CD4-positive, alpha-beta T cell (primary cell): ENCODE measurements at regions of chr6 and their contacts with region 1.

Region 1: GRCh38 chr6:145963216-145964068 is 716 bp downstream of the SHPRH start:
- DNase-seq: peak; percentile 5 to 64 (median 26)
- ATAC-seq: peak; percentile 15
- H3K4me3 ChIP-seq: peak overlapping the region; percentile 76
- H3K4me3 Mint-ChIP-seq: peak overlapping the region; percentile 96
- H3K27ac ChIP-seq: no peak overlapping the region
- H3K27ac Mint-ChIP-seq: peak overlapping the region; percentile 98
- H3K4me1 ChIP-seq: peaks cover 7% of the 10 kb centered on the region
- H3K4me1 Mint-ChIP-seq: peaks cover 58% of the 10 kb centered on the region
- H3K27me3 ChIP-seq: no peaks in the 10 kb centered on the region
- H3K27me3 Mint-ChIP-seq: no peaks in the 10 kb centered on the region
- CTCF ChIP-seq: no peak

Region 2: DNA sequence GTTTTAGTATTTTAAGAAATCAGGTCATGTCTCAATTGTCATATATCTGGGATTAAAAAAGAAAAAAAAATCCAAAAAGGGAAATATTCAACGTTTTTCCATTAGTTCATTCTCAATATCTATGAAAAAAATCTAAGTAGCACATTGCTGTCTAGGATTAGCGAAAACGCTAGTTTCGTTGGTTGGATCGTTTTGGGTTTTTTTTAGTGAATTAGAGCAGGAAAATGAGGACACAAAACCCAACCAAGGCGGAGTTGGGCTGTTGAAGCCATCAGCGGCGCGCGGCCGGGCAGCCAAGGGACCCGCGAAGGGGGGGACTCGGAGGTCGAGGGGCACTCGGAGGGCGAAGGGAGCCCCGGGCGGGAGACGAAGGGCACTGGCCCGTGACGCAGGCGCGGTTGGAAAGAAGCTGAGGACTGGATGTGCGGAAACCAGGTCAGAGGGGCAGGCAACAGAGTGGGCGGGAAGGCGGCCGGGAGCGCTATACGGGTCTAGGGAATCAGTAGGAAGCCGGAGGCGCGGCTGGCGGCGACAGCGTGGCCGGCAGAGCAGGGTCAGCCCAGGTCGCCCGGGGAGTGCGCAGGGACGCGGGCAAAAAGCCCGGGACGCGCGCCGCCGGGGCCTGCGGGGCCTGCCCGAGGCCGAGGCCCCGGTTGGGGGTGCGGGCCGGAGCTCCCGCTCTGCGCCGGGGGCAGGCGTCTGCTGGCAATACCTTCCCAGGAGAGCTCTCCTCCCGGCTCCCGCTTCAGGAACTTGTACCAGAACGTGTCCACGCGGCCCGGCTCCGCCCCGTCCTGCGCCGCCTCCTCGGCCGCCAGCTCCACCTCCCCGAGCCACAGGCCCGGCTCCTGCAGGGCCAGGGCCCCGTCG is 228.7 kb before region 1 on chr6:
- CTCF ChIA-PET with region 1: interaction called, 3 read pairs
- POLR2A ChIA-PET with region 1: interaction called, 37 read pairs
- intact Hi-C with region 1: loop called (anchors 5 to 10 kb)
- DNase-seq: peak; percentile 33 to 75 (median 54)
- ATAC-seq: peak; percentile 59
- H3K4me3 ChIP-seq: peak overlapping the region; percentile 71
- H3K4me3 Mint-ChIP-seq: peak overlapping the region; percentile 100
- H3K27ac ChIP-seq: peak overlapping the region; percentile 6 to 13
- H3K27ac Mint-ChIP-seq: peak overlapping the region; percentile 100
- H3K4me1 ChIP-seq: no peaks in the 10 kb centered on the region
- H3K4me1 Mint-ChIP-seq: peaks cover 16% of the 10 kb centered on the region
- H3K27me3 ChIP-seq: no peaks in the 10 kb centered on the region
- H3K27me3 Mint-ChIP-seq: no peaks in the 10 kb centered on the region
- CTCF ChIP-seq: no peak